Sciatic nerve (tissue), 2 donors: ENCODE measurements at regions of chr2 and their contacts with region 1.

Region 1: GRCh38 chr2:10022966-10023685 is 20.2 kb upstream of the KLF11 start:
- DNase-seq: no peak
- ATAC-seq: no peak

Region 2: DNA sequence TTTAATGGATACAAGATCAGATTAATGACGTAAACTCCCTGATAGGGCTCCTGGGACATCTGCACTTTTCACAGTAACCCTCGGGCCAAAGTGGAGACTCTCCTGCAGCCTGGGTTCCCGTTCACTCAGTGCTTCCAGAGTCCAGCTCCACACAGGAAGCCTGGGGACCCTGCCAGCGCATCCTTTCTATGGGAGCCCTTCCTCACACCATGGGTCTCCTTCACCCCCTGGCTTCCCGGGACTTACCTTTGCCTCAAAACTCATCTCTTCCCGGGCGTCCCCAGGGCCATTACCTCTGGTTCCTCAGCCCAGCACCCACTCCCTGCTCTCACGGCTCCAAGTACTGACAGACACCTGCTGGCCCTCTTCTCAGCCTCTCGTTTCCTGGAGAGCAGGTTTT is 20.4 kb before region 1 on chr2:
- intact Hi-C with region 1: loop called (anchors 1 kb)
- DNase-seq: no peak
- ATAC-seq: no peak

Region 3: GRCh38 chr2:10355471-10356458 is 332.6 kb after region 1 on chr2:
- intact Hi-C with region 1: no loop called
- DNase-seq: no peak
- ATAC-seq: no peak

Region 4: DNA sequence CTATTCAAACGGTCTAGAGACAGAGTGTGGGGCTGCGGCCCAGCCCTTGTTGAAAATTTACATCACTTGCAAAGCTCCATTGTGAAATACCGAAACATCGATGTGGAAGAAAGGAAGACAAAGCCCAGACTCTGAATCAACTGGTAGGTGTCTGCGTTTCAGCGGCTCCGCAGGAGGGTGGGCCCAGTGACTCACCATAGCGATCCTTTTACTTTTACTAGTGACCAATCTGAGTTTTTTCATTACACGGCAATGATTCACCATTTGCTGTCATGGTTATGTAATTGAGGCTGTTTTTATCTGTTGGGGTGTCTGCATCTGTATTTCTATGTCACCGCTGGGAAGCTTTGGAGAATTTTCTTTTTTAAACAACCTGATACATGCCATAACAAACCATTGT is 491.6 kb after region 1 on chr2:
- intact Hi-C with region 1: no loop called
- DNase-seq: peak; percentile 9
- ATAC-seq: no peak